ENCODE measurements at regions of chr17 and their contacts with region 1.

Region 1: GRCh38 chr17:57671667-57672632 is 73.1 kb downstream of the CCDC182 start:
- DNase-seq: peak; percentile 73
- H3K4me3 Mint-ChIP-seq: no peak overlapping the region
- H3K27ac Mint-ChIP-seq: peak overlapping the region; percentile 82
- H3K4me1 Mint-ChIP-seq: peaks cover 27% of the 10 kb centered on the region
- H3K27me3 Mint-ChIP-seq: no peaks in the 10 kb centered on the region

Region 2: DNA sequence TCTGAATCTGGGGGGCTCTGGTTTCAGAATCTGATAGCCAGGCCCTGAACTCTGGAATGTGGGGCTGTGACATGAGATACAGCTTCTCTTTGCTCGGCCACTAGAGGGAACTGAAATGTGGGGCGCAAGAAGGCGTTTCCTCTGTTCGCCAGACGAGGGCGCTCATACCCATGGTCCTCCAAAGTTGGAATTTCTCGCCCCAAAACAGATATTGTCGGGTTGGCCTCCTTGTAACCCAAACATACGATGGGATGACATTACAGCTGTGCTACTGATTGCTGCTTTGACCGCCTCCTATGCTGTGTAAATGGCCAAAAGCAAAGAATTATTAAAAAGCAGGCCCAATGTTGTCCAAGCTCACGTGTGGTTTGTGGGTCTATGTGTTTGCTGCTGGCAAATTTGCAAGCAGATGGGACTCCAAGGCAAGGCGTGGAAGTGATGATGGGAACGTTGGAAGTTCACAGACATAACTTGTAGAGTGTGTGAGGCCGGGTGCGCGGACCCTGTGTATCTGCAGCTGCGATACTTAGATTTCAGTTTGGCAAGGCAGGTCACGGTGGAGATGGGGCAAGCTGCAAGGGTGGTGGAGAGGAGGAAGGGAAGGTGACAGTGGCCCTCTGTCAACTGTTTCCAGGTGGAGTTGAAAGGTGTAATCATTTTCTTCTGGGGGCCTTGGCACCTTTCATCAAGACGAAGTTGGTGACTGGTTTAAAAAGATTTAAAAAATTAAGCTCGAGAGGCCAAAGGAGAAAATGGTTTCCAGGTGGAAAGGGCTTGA is 428.6 kb before region 1 on chr17:
- CTCF ChIA-PET with region 1: interaction called, 10 read pairs
- POLR2A ChIA-PET with region 1: no interaction called
- DNase-seq: peak; percentile 79
- H3K4me3 Mint-ChIP-seq: no peak overlapping the region
- H3K27ac Mint-ChIP-seq: no peak overlapping the region
- H3K4me1 Mint-ChIP-seq: peaks cover 8% of the 10 kb centered on the region
- H3K27me3 Mint-ChIP-seq: peaks cover 23% of the 10 kb centered on the region

Region 3: DNA sequence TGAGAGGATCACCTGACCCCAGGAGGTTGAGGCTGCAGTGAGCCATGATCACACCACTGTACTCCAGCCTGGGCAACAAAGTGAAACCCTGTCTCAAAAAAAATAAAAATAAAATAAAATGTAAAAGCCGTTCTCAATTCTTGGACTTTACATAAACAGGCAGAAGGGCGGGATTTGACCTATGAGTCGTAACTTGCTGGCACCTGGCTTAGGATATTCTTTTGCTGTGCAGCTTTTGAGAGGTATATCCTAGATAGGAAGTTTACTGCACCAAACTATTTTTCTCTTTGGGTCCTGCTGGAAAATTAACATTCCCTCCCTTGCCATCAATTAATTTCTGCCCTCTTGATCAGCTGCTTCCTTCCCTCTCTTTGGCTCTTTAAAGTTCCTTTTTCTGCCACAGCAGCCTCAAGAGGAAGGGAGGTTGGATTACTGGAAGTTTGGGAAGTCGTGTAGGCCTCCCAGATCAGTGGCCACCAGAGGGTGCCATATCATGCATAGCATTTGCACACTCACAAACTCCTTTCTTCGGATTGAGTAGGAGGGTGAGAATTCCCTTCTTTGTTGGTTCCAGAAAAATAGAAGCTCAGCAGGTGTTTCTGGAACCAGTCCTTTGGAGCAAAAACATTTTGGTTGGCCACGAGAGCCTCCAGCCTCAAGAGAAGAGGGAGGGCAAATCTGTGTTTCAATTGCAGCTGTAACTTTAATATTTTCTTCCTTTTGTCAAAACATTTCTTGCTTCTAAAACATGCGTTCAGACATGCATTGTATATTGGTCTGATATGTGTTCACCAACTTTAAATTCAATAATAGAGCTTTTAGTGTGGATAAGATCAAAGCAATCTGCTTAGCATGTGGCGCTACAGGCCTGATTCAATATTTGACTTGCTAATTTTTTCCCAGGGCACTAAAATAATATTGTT is 74.2 kb before region 1 on chr17:
- CTCF ChIA-PET with region 1: interaction called, 22 read pairs
- POLR2A ChIA-PET with region 1: no interaction called
- DNase-seq: peak; percentile 38
- H3K4me3 Mint-ChIP-seq: no peak overlapping the region
- H3K27ac Mint-ChIP-seq: peak overlapping the region; percentile 99
- H3K4me1 Mint-ChIP-seq: peaks cover 59% of the 10 kb centered on the region
- H3K27me3 Mint-ChIP-seq: no peaks in the 10 kb centered on the region

Region 4: GRCh38 chr17:57603978-57604377 is 68.0 kb before region 1 on chr17:
- CTCF ChIA-PET with region 1: interaction called, 22 read pairs
- POLR2A ChIA-PET with region 1: no interaction called
- DNase-seq: peak; percentile 80
- H3K4me3 Mint-ChIP-seq: peak overlapping the region; percentile 68
- H3K27ac Mint-ChIP-seq: peak overlapping the region; percentile 99
- H3K4me1 Mint-ChIP-seq: peaks cover 95% of the 10 kb centered on the region
- H3K27me3 Mint-ChIP-seq: no peaks in the 10 kb centered on the region

Region 5: GRCh38 chr17:57636985-57637665 is 34.8 kb before region 1 on chr17:
- CTCF ChIA-PET with region 1: no interaction called
- POLR2A ChIA-PET with region 1: no interaction called
- DNase-seq: no peak
- H3K4me3 Mint-ChIP-seq: no peak overlapping the region
- H3K27ac Mint-ChIP-seq: peak overlapping the region; percentile 48
- H3K4me1 Mint-ChIP-seq: no peaks in the 10 kb centered on the region
- H3K27me3 Mint-ChIP-seq: no peaks in the 10 kb centered on the region

Region 6: GRCh38 chr17:57685505-57686132 is 13.7 kb after region 1 on chr17:
- CTCF ChIA-PET with region 1: interaction called, 10 read pairs
- POLR2A ChIA-PET with region 1: no interaction called
- DNase-seq: no peak
- H3K4me3 Mint-ChIP-seq: no peak overlapping the region
- H3K27ac Mint-ChIP-seq: no peak overlapping the region
- H3K4me1 Mint-ChIP-seq: no peaks in the 10 kb centered on the region
- H3K27me3 Mint-ChIP-seq: peaks cover 16% of the 10 kb centered on the region

Measured in activated CD4-positive, alpha-beta T cell treated with anti-CD3 and anti-CD28 coated beads, Interleukin-2, amount 10 ng/mL, durations not matched to agents 7 days and 5 days (primary cell).